Heart left ventricle (tissue), 16 donors: ENCODE measurements at regions of chr16 and their contacts with region 1.

Region 1: GRCh38 chr16:77863250-77863649 is 74.9 kb downstream of the VAT1L start:
- DNase-seq: peak in 3 of 5 donors; percentile 28 to 56 (median 53)
- ATAC-seq: peak; percentile 10 to 46 (median 26)
- H3K4me3 ChIP-seq: no peak overlapping the region
- H3K27ac ChIP-seq: peak overlapping the region in 7 of 12 donors; percentile 17 to 91 (median 54)
- H3K4me1 ChIP-seq: peaks cover 0 to 35% (median 12%) of the 10 kb centered on the region in 12 donors
- H3K27me3 ChIP-seq: no peaks in the 10 kb centered on the region
- CTCF ChIP-seq: no peak
- POLR2A ChIP-seq: no peak

Region 2: GRCh38 chr16:77919761-77920415 is 56.6 kb after region 1 on chr16:
- intact Hi-C with region 1: loop called in 1 of 10 experiments (anchors 5 kb)
- DNase-seq: no peak
- ATAC-seq: peak in 1 of 4 donors; percentile 29
- H3K4me3 ChIP-seq: no peak overlapping the region
- H3K27ac ChIP-seq: no peak overlapping the region
- H3K4me1 ChIP-seq: peaks cover 0 to 38% (median 4%) of the 10 kb centered on the region in 12 donors
- H3K27me3 ChIP-seq: no peaks in the 10 kb centered on the region
- CTCF ChIP-seq: no peak
- POLR2A ChIP-seq: no peak